WTC11 (cell line): ENCODE measurements at regions of chr14 and their contacts with region 1.

Region 1: GRCh38 chr14:53295985-53296582 is 143.0 kb upstream of the DDHD1 start:
- DNase-seq: no peak
- ATAC-seq: no peak
- H3K4me3 Mint-ChIP-seq: no peak overlapping the region
- H3K27ac Mint-ChIP-seq: no peak overlapping the region
- H3K4me1 Mint-ChIP-seq: 0 out of 2 replicates have a peak, but pooled peaks cover 4% of the 10 kb centered on the region
- H3K27me3 Mint-ChIP-seq: no peaks in the 10 kb centered on the region
- CTCF ChIP-seq: peak; percentile 68

Region 2: GRCh38 chr14:53217295-53217994 is 78.6 kb before region 1 on chr14:
- CTCF ChIA-PET with region 1: interaction called, 11 read pairs
- POLR2A ChIA-PET with region 1: no interaction called
- DNase-seq: peak; percentile 93
- ATAC-seq: peak; percentile 99
- H3K4me3 Mint-ChIP-seq: peak overlapping the region; percentile 78
- H3K27ac Mint-ChIP-seq: no peak overlapping the region; the same call in 1 of the 2 replicates
- H3K4me1 Mint-ChIP-seq: peaks cover 5% of the 10 kb centered on the region
- H3K27me3 Mint-ChIP-seq: no peaks in the 10 kb centered on the region
- CTCF ChIP-seq: no peak

Region 3: GRCh38 chr14:53306267-53306721 is 10.2 kb after region 1 on chr14:
- CTCF ChIA-PET with region 1: interaction called, 19 read pairs
- POLR2A ChIA-PET with region 1: no interaction called
- DNase-seq: peak; percentile 53
- ATAC-seq: peak; percentile 89
- H3K4me3 Mint-ChIP-seq: peak overlapping the region; percentile 45
- H3K27ac Mint-ChIP-seq: no peak overlapping the region
- H3K4me1 Mint-ChIP-seq: peaks cover 6% of the 10 kb centered on the region; the same call in 1 of the 2 replicates
- H3K27me3 Mint-ChIP-seq: no peaks in the 10 kb centered on the region; the same call in none of the 2 replicates
- CTCF ChIP-seq: peak; percentile 60